ENCODE measurements at regions of chr11 and their contacts with region 1.

Region 1: DNA sequence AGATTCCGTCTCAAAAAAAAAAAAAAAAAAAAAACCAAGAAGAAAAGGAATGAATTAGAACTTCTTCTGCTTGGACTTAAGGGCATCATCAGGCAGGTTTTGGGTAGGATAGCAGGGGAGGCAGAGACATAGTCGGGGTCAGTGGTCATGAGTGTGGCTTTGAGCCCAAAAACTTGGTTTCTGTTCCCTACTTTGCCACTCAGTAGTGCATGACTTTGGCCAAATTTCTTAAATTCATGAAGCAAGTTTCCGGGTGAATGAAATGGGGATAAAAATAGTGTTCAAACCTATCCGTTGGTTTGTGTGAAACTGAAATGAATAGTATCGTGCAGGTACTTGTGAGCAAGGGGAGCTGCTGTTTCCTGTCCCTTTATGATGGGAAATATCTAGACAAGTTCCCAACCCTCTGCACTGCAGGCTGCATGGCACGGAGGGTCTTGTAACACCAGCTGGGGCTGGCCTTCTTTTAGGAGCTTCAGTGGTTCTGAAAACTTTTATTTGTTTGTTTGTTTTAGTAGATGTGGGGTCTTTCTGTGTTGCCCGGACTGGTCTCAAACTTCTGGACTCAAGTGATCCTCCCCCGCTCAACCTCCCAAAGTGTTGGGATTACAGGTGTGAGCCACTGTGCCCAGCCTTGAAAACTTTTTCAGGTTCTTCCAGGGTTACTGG is 18.4 kb downstream of the NEAT1 start:
- DNase-seq: no peak
- ATAC-seq: peak; percentile 38
- H3K4me3 Mint-ChIP-seq: peak overlapping the region; percentile 77
- H3K27ac Mint-ChIP-seq: peak overlapping the region; percentile 92
- H3K4me1 Mint-ChIP-seq: peaks cover 70% of the 10 kb centered on the region
- H3K27me3 Mint-ChIP-seq: no peaks in the 10 kb centered on the region
- CTCF ChIP-seq: no peak

Region 2: GRCh38 chr11:65425105-65425970 is 15.6 kb before region 1 on chr11:
- CTCF ChIA-PET with region 1: interaction called, 3 read pairs
- POLR2A ChIA-PET with region 1: interaction called, 332 read pairs
- intact Hi-C with region 1: loop called (anchors 1 kb)
- DNase-seq: no peak
- ATAC-seq: peak; percentile 38
- H3K4me3 Mint-ChIP-seq: peak overlapping the region; percentile 100
- H3K27ac Mint-ChIP-seq: peak overlapping the region; percentile 100
- H3K4me1 Mint-ChIP-seq: peaks cover 78% of the 10 kb centered on the region
- H3K27me3 Mint-ChIP-seq: no peaks in the 10 kb centered on the region
- CTCF ChIP-seq: no peak

Region 3: DNA sequence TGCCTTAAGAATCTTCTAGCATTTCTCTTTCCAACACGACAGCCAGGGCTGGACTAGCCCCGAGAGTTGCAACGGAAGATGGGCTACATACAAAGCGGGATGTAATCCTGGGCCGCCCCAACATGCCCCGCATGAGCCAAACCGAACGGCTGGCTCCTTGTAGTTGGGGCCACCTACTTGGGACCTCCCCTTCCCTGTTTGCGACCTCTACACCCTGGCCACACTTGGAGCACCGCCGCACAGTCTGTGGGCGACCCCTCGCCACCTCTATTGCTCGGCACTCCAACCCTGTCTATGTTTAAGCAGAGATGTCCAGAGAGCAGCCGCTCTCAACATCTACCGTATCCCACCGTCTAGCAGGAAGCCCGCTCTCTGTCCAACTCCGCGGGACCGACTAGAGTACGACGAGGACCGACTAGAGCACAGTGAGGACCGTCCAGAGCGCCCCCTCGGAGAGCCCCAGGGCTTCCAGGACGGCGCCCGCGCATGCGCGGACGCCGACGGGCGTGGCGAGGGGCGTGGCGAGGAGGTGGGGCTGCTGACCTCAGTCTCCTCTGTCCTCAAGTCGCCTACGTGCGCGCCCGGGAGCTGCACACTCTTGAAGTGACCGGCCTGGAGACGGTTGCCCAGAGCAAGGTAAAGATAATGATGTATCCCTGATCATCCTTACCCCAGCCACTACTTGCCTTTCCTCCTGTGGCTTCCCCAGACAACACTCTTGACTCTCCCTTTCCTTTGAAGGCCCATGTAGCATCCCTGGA is 13.9 kb after region 1 on chr11:
- CTCF ChIA-PET with region 1: no interaction called
- POLR2A ChIA-PET with region 1: interaction called, 5 read pairs
- intact Hi-C with region 1: loop called (anchors 1 kb)
- DNase-seq: peak; percentile 83
- ATAC-seq: peak; percentile 98
- H3K4me3 Mint-ChIP-seq: peak overlapping the region; percentile 95
- H3K27ac Mint-ChIP-seq: peak overlapping the region; percentile 90
- H3K4me1 Mint-ChIP-seq: peaks cover 32% of the 10 kb centered on the region
- H3K27me3 Mint-ChIP-seq: no peaks in the 10 kb centered on the region
- CTCF ChIP-seq: no peak

Region 4: GRCh38 chr11:65471410-65471762 is 30.4 kb after region 1 on chr11:
- CTCF ChIA-PET with region 1: interaction called, 6 read pairs
- POLR2A ChIA-PET with region 1: interaction called, 71 read pairs
- intact Hi-C with region 1: loop called (anchors 1 kb)
- DNase-seq: no peak
- ATAC-seq: no peak
- H3K4me3 Mint-ChIP-seq: peak overlapping the region; percentile 66
- H3K27ac Mint-ChIP-seq: peak overlapping the region; percentile 91
- H3K4me1 Mint-ChIP-seq: peaks cover 36% of the 10 kb centered on the region
- H3K27me3 Mint-ChIP-seq: no peaks in the 10 kb centered on the region
- CTCF ChIP-seq: no peak

Region 5: DNA sequence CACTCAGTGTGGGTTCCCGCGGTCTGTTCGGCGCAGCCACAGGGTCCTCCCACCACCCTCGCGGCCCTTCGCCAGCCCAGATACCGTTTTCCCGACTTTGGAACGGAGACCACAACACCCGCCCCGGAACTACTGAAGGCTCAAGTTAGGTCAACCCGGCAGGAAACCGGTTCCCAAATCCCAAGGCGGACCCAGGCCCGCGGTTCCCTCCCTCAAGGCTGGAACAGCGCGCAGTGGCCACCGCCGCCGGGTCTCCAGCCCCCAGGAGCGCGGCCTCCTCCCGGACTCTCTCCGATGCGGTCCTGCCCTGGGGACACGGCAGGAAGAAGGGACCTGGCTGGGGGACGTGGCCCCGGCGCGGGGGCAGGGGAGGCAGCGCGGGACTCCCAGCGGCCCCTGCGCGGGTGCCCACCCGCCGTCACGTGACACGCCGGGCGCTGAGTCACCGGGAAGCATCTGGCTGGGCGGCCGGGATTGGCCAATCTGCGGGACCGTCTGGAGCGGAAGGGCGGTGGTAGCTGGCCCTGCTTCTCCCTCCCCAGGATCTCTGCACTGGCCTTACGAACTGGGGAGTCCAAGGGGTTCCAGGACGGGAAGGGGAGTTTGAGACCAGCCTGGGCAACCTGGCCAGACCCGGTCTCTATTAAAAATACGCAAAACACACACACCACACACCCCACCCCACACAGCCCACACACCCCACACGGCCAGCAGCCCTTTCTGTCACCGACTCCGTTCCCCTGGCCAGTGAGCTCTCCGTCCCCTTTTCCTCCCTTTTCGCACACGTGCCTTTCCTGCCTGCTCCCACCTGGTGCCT is 36.4 kb after region 1 on chr11:
- CTCF ChIA-PET with region 1: interaction called, 3 read pairs
- POLR2A ChIA-PET with region 1: interaction called, 71 read pairs
- intact Hi-C with region 1: loop called (anchors 1 kb)
- DNase-seq: peak; percentile 92
- ATAC-seq: peak; percentile 86
- H3K4me3 Mint-ChIP-seq: peak overlapping the region; percentile 96
- H3K27ac Mint-ChIP-seq: peak overlapping the region; percentile 99
- H3K4me1 Mint-ChIP-seq: peaks cover 24% of the 10 kb centered on the region
- H3K27me3 Mint-ChIP-seq: no peaks in the 10 kb centered on the region
- CTCF ChIP-seq: no peak

Region 6: GRCh38 chr11:65487413-65488272 is 46.7 kb after region 1 on chr11:
- CTCF ChIA-PET with region 1: no interaction called
- POLR2A ChIA-PET with region 1: interaction called, 133 read pairs
- intact Hi-C with region 1: no loop called
- DNase-seq: no peak
- ATAC-seq: peak; percentile 56
- H3K4me3 Mint-ChIP-seq: peak overlapping the region; percentile 71
- H3K27ac Mint-ChIP-seq: peak overlapping the region; percentile 82
- H3K4me1 Mint-ChIP-seq: peaks cover 48% of the 10 kb centered on the region
- H3K27me3 Mint-ChIP-seq: no peaks in the 10 kb centered on the region
- CTCF ChIP-seq: no peak